ENCODE measurements at regions of chr2 and their contacts with region 1.

Region 1: DNA sequence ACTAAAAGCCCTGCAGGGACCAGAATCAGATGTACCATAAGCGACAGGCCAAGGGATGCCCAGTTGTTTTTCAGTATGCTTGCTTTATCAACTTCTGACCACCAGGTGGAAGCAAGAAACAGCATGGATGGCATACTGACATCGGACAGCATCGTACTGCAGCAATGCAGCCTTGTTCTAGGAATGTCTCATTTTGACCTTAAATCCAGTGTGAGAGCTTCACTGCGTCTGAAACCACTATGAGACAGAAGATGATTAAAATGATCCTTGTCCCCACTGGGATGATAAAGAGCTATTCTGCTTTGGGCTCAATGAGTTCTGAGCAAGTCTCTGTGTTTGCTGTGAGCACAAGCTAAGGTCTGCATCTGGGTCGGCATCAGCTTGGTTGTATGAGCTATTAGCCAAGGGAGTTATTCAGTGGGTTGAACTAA is 54.3 kb downstream of the CDK15 start:
- DNase-seq: peak; percentile 77
- H3K4me3 Mint-ChIP-seq: no peak overlapping the region
- H3K27ac Mint-ChIP-seq: no peak overlapping the region
- H3K4me1 Mint-ChIP-seq: peaks cover 5% of the 10 kb centered on the region
- H3K27me3 Mint-ChIP-seq: no peaks in the 10 kb centered on the region
- CTCF ChIP-seq: peak; percentile 71

Region 2: GRCh38 chr2:201847481-201847880 is 13.2 kb before region 1 on chr2:
- CTCF ChIA-PET with region 1: interaction called, 31 read pairs
- POLR2A ChIA-PET with region 1: no interaction called
- intact Hi-C with region 1: no loop called
- DNase-seq: no peak
- H3K4me3 Mint-ChIP-seq: no peak overlapping the region
- H3K27ac Mint-ChIP-seq: no peak overlapping the region
- H3K4me1 Mint-ChIP-seq: peaks cover under 1% of the 10 kb centered on the region
- H3K27me3 Mint-ChIP-seq: no peaks in the 10 kb centered on the region
- CTCF ChIP-seq: no peak

Region 3: DNA sequence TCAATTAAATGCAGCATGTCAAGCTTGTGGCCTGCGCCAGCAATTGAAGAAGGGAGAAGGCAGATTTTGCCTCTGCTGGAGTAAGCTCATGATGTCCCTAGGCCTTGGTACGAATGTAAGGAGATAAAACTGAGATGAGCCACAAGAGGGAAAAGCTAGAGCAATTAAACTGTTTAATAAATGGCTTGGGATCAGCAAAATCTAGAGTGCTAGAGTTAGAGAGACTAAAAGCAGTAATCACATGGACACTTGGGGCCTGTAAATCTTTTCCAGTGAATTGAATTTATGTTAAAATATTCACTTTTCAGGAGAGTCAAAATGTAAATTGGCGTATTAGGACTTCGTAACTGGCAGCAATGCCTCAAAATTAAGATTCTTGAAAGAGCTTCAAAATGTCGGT is 31.9 kb after region 1 on chr2:
- CTCF ChIA-PET with region 1: interaction called, 20 read pairs
- POLR2A ChIA-PET with region 1: no interaction called
- intact Hi-C with region 1: no loop called
- DNase-seq: no peak
- H3K4me3 Mint-ChIP-seq: no peak overlapping the region
- H3K27ac Mint-ChIP-seq: no peak overlapping the region
- H3K4me1 Mint-ChIP-seq: peaks cover 12% of the 10 kb centered on the region
- H3K27me3 Mint-ChIP-seq: no peaks in the 10 kb centered on the region
- CTCF ChIP-seq: no peak

Region 4: DNA sequence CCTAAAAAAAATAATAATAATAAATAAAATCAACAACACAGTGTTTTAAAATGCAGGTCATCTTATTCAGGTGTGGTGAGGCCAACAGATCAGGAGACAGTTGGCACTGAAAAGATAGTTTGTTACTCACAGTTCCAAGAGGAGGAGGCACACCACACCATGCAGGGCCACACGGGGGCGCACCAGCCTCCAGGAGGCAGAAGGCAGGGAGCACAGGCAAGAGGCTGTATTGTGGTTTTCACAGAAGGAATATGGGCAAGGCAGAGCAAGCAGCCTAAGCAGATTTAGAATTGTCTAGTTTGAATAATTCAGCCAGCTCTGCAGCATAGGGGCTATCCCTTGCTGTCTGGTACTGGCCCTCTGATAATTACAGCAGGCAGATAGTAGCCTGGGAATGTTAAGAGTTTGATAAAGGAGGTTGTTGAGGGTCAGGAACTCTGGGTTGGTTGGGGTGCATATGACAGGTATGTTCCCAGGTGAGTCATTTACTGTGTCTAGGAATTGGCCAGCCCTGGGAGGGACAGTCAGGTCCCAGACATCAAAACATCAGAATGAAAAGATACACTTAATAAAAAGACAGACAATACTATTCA is 243.7 kb after region 1 on chr2:
- CTCF ChIA-PET with region 1: no interaction called
- POLR2A ChIA-PET with region 1: no interaction called
- intact Hi-C with region 1: loop called (anchors 1 kb)
- DNase-seq: peak; percentile 69
- H3K4me3 Mint-ChIP-seq: no peak overlapping the region
- H3K27ac Mint-ChIP-seq: no peak overlapping the region
- H3K4me1 Mint-ChIP-seq: no peaks in the 10 kb centered on the region
- H3K27me3 Mint-ChIP-seq: peaks cover 18% of the 10 kb centered on the region
- CTCF ChIP-seq: peak; percentile 55

Region 5: DNA sequence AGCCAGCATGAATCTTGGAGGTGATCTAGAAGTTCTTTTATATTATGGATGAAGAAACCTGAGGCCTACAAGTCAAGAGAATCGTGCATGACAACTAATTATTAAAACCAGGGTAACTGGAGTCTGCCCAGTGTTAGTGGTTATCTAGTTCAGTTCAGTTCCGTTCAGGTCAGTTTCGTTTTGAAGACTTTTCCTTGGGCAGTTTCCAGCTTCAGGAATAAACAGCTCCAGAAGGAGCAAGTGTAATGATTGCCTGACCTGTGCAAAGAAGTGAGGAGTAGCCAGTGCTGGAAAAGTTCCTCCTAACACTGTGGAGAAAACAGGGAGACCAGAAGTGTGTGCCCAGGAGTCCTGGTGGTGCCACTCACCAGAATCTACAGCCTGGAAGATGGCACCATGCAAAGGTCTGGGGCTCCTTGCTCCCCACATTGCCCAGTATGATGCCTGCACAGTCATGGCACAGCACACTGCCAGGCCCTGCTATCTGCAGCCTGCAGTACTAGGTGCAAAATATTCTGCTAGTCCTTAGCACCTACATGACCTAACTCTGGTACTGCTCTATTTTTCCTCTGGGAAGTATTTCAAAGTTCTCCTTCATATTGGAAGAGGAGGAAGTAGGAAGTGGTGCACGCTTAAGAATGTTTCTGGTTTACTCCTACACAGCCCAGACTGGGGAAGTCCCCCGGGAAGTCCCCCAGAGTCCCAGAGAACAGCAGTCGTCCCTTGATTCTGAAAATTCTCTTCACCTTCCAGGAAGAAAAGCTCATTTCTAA is 312.0 kb after region 1 on chr2:
- CTCF ChIA-PET with region 1: interaction called, 208 read pairs
- POLR2A ChIA-PET with region 1: interaction called, 12 read pairs
- intact Hi-C with region 1: no loop called
- DNase-seq: no peak
- H3K4me3 Mint-ChIP-seq: no peak overlapping the region
- H3K27ac Mint-ChIP-seq: no peak overlapping the region
- H3K4me1 Mint-ChIP-seq: no peaks in the 10 kb centered on the region
- H3K27me3 Mint-ChIP-seq: no peaks in the 10 kb centered on the region
- CTCF ChIP-seq: no peak

Region 6: DNA sequence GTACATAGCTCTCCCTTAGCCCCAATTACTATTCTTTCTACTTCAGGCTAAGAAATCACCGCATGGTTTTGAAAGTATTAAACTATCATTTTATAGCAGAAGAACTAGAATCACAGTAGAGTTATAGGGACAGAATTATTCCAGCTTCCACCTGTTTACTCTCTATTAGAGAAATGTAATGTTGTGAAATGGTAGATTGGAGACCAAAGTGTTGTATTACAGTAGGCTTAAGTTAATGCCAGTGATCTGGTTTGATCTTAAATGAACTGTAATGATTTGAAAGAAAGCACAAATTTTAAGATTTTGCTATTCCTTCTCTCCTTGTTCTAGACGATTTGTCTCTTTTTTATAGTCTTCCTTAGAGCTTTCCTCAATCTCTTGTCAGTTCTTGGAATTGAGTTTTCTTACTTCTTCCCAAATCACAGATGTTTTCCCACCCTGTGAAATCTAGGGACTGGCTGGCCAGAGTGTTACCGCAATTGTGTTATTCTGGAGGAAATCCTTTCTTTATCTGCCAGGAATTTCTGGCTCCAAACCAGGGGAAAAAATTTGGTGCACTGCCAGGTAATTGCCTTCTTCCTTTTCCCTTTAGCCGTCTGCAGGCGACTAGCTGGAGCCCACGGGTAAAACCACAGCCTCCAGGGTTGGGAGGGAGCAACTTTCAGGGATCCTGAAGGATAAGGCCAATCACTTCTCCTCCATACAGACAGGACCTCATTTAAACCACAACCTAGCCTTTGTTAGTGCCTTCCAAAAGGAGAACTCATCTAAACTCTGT is 456.6 kb after region 1 on chr2:
- CTCF ChIA-PET with region 1: no interaction called
- POLR2A ChIA-PET with region 1: no interaction called
- intact Hi-C with region 1: no loop called
- DNase-seq: peak; percentile 95
- H3K4me3 Mint-ChIP-seq: no peak overlapping the region
- H3K27ac Mint-ChIP-seq: no peak overlapping the region
- H3K4me1 Mint-ChIP-seq: peaks cover 16% of the 10 kb centered on the region
- H3K27me3 Mint-ChIP-seq: no peaks in the 10 kb centered on the region
- CTCF ChIP-seq: no peak

Measured in MCF 10A (cell line).